HAP-1 (cell line): ENCODE measurements at regions of chr1 and their contacts with region 1.

Region 1: GRCh38 chr1:100866041-100866900 is 28.4 kb downstream of the EXTL2 start:
- DNase-seq: peak in 1 of 2 experiments; percentile 56
- H3K4me3 ChIP-seq: no peak overlapping the region
- H3K4me1 ChIP-seq: peaks cover 8% of the 10 kb centered on the region
- H3K27me3 ChIP-seq: no peaks in the 10 kb centered on the region

Region 2: DNA sequence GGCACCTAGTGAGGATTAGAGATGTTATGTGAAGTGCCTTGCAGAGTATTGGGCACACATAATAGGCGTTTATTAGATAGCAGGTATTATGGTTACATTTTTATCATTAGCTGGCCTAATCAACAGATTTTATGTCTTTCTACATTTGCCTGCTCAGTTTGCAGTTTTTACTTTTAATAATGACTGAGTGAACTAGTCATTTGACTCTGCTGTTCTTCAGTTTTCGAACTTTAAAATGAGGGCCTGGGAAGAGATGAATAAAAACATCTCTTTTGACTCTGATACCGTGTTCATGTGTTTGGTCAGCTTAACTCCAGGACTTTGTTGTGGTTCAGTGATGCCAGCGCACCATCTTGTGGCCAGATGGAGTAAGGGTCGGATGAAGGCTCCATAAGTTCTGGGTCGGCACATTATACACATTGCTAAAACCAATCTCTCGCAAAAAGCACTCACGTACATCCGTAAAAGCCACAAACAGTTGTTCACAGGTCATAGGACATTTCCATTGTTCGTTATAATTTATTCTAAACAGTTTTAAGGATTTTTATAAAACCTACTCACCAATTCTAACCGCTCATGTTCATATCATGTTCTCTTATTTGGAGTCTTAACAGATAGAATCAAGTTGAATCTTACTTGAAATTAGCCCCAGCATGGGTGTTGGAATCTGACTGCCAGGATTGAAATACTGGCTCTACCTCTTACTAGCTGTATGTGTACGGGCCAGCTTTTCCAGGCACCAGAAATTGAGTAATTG is 406.7 kb before region 1 on chr1:
- in situ Hi-C with region 1: loop called (anchors 10 kb)
- DNase-seq: peak; percentile 78 to 79
- H3K4me3 ChIP-seq: no peak overlapping the region
- H3K4me1 ChIP-seq: peaks cover 29% of the 10 kb centered on the region
- H3K27me3 ChIP-seq: no peaks in the 10 kb centered on the region

Region 3: GRCh38 chr1:100613817-100614559 is 252.3 kb before region 1 on chr1:
- in situ Hi-C with region 1: loop called (anchors 10 kb)
- DNase-seq: no peak
- H3K4me3 ChIP-seq: no peak overlapping the region
- H3K4me1 ChIP-seq: no peaks in the 10 kb centered on the region
- H3K27me3 ChIP-seq: no peaks in the 10 kb centered on the region

Region 4: GRCh38 chr1:100902365-100902764 is 36.1 kb after region 1 on chr1:
- in situ Hi-C with region 1: no loop called
- DNase-seq: no peak
- H3K4me3 ChIP-seq: no peak overlapping the region
- H3K4me1 ChIP-seq: peaks cover 11% of the 10 kb centered on the region
- H3K27me3 ChIP-seq: no peaks in the 10 kb centered on the region

Region 5: GRCh38 chr1:101190441-101190840 is 324.2 kb after region 1 on chr1:
- in situ Hi-C with region 1: no loop called
- DNase-seq: no peak
- H3K4me3 ChIP-seq: no peak overlapping the region
- H3K4me1 ChIP-seq: no peaks in the 10 kb centered on the region; the same call in 1 of the 2 replicates
- H3K27me3 ChIP-seq: no peaks in the 10 kb centered on the region